ENCODE measurements at regions of chr16 and their contacts with region 1.

Region 1: GRCh38 chr16:72743011-72743761 is 304.7 kb downstream of the ZFHX3 start:
- DNase-seq: no peak
- H3K4me3 Mint-ChIP-seq: no peak overlapping the region
- H3K27ac Mint-ChIP-seq: no peak overlapping the region
- H3K4me1 Mint-ChIP-seq: no peaks in the 10 kb centered on the region
- H3K27me3 Mint-ChIP-seq: no peaks in the 10 kb centered on the region

Region 2: DNA sequence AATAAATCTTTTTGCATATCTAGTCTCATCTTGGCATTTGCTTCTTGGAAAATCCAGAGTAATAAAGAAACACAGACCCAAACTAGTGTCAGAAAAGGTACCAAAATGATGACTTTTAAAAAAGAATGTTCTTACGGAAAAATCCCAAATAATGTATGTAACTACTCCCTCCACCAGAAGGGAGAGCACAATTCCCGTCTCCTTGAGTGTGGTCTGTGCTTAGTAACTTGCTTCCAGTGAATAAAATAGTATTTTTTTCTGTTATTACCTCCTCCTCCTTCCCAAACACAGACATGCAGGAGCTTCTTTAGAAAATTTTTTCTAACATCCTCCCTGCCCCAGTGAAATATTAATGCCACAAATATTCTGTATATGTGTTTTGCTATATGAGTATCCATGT is 53.3 kb before region 1 on chr16:
- intact Hi-C with region 1: loop called (anchors 10 kb)
- DNase-seq: no peak
- H3K4me3 Mint-ChIP-seq: no peak overlapping the region
- H3K27ac Mint-ChIP-seq: no peak overlapping the region
- H3K4me1 Mint-ChIP-seq: no peaks in the 10 kb centered on the region
- H3K27me3 Mint-ChIP-seq: no peaks in the 10 kb centered on the region

Region 3: GRCh38 chr16:72711823-72712222 is 31.4 kb before region 1 on chr16:
- intact Hi-C with region 1: no loop called
- DNase-seq: no peak
- H3K4me3 Mint-ChIP-seq: no peak overlapping the region
- H3K27ac Mint-ChIP-seq: no peak overlapping the region
- H3K4me1 Mint-ChIP-seq: no peaks in the 10 kb centered on the region
- H3K27me3 Mint-ChIP-seq: no peaks in the 10 kb centered on the region